H1 (cell line): ENCODE measurements at regions of chr1 and their contacts with region 1.

Region 1: GRCh38 chr1:8962812-8963530 is 17.3 kb downstream of the CA6 start:
- DNase-seq: peak; percentile 62 to 76
- H3K4me3 ChIP-seq: no peak overlapping the region
- H3K27ac ChIP-seq: no peak overlapping the region
- H3K4me1 ChIP-seq: peaks cover 0 to 2% (median 1%) of the 10 kb centered on the region in 4 experiments; a peak in 4 of 7 replicates
- H3K27me3 ChIP-seq: no peaks in the 10 kb centered on the region; a peak in 1 of 7 replicates
- CTCF ChIP-seq: peak; percentile 73 to 87 (median 78)
- EP300 ChIP-seq: no peak
- POLR2A ChIP-seq: no peak
- RAD21 ChIP-seq: peak; percentile 46 to 64; a peak in 3 of 4 replicates

Region 2: DNA sequence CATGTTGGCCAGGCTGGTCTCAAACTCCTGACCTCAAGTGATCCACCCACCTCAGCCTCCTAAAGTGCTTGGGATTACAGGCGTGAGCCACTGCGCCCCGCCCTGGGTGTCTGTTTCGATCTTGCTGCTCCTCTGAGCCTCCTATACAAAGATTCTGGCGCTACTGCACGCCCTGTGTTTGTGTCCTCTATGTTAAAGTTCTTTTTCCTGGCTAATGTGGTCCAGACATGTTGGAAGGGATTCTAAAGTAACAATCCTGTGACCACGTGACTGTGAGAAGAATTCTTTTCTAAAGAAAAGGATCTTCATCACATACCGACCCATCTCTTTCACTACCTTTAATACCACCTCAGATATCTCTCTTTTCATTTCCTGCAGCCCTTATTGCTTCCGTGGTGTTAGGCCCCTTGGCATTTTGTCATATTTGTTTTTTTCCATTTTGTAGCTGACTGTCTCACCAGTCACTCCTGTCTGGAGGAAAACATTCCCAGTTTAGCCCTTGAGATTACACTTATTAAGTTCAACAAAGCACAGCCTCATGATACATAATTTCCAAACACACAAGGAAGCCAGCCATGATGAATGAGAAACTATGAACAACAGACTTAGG is 57.3 kb before region 1 on chr1:
- CTCF ChIA-PET with region 1: interaction called, 12 read pairs
- POLR2A ChIA-PET with region 1: no interaction called
- DNase-seq: no peak
- H3K4me3 ChIP-seq: no peak overlapping the region
- H3K27ac ChIP-seq: no peak overlapping the region
- H3K4me1 ChIP-seq: peaks cover 0 to 5% (median 3%) of the 10 kb centered on the region in 4 experiments; a peak in 3 of 7 replicates
- H3K27me3 ChIP-seq: no peaks in the 10 kb centered on the region
- CTCF ChIP-seq: no peak
- EP300 ChIP-seq: no peak
- POLR2A ChIP-seq: no peak
- RAD21 ChIP-seq: no peak

Region 3: GRCh38 chr1:8941906-8942305 is 21.1 kb before region 1 on chr1:
- CTCF ChIA-PET with region 1: interaction called, 18 read pairs
- POLR2A ChIA-PET with region 1: interaction called, 3 read pairs
- DNase-seq: no peak
- H3K4me3 ChIP-seq: no peak overlapping the region
- H3K27ac ChIP-seq: no peak overlapping the region
- H3K4me1 ChIP-seq: peaks cover 7 to 24% (median 14%) of the 10 kb centered on the region in 4 experiments
- H3K27me3 ChIP-seq: no peaks in the 10 kb centered on the region
- CTCF ChIP-seq: no peak
- EP300 ChIP-seq: no peak
- POLR2A ChIP-seq: no peak
- RAD21 ChIP-seq: no peak

Region 4: DNA sequence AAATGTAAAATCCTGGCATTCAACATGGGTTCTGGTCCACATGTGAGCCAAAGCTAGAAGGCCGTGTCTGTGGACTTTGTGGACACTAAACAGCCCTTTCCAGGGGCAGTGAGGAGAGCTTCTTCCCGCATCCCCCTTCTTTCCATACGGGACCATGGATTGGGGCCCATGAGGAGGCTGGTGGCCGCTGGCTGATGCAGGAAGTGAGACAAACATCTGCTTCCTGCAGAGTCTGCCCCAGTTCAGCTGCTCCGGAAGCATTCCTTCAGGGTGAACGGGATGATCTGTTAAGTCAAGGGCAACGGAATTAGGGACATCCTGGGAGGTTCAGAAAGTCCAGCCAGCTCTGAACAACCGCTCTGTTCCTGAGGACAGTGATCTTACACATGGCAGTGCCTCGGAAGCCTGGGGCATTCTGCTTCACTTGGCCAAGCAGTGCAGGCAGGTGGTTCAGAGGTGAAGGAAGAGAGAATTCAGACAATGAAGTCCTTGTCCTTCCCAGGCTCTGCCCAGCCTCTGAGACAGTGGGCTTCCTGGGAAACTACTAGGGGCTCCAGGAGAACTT is 15.8 kb before region 1 on chr1:
- CTCF ChIA-PET with region 1: interaction called, 27 read pairs
- POLR2A ChIA-PET with region 1: interaction called, 3 read pairs
- DNase-seq: no peak
- H3K4me3 ChIP-seq: no peak overlapping the region
- H3K27ac ChIP-seq: no peak overlapping the region
- H3K4me1 ChIP-seq: peaks cover 7 to 23% (median 15%) of the 10 kb centered on the region in 4 experiments
- H3K27me3 ChIP-seq: no peaks in the 10 kb centered on the region
- CTCF ChIP-seq: no peak
- EP300 ChIP-seq: no peak
- POLR2A ChIP-seq: no peak
- RAD21 ChIP-seq: no peak

Region 5: GRCh38 chr1:8976896-8977450 is 14.0 kb after region 1 on chr1:
- CTCF ChIA-PET with region 1: interaction called, 12 read pairs
- POLR2A ChIA-PET with region 1: interaction called, 3 read pairs
- DNase-seq: no peak
- H3K4me3 ChIP-seq: no peak overlapping the region
- H3K27ac ChIP-seq: no peak overlapping the region
- H3K4me1 ChIP-seq: peaks cover 0 to 2% (median 0%) of the 10 kb centered on the region in 4 experiments; a peak in 1 of 7 replicates
- H3K27me3 ChIP-seq: no peaks in the 10 kb centered on the region
- CTCF ChIP-seq: no peak
- EP300 ChIP-seq: no peak
- POLR2A ChIP-seq: no peak
- RAD21 ChIP-seq: no peak